MCF 10A (cell line): ENCODE measurements at regions of chr2 and their contacts with region 1.

Region 1: DNA sequence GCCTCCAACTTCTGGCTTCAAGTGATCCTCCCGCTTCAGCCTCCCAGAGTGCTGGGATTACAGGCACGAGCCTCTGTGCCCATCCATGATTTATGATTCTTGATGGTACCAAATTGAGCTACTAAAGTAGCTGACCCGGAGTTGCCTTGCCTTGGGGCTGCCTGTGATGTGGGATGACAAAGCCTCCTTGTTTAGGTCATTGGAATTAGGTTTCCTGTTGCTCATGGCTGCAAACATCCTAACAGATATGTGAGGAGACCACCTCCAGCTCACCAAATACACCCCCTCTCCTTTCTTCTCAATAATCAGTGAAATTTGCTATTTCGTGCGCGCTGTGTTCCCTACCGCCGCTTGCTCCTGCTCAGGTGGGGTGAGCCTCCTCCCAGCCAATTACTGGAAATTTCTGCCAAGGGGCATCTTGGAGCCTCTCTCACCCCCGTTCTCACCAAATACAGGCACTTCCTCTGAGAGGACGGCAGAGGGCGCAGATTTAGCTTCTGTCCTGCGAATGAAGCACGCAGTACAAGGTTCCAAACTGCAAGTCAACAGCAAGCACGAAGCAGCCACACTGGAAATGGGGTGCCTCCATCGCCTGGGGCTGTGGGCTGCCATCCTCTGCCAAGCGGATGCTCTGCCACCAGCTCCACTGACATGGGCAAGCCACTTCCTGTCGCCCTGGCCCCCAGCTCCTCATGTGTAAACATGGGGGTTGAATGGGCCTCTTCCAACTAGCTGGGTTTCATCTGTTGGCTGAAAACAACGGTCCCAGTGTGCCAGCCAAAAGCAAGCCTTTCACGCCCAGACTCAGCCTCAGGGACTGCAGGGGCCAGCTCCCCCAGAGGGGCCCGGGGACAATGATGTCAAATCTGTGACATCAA is 71.7 kb downstream of the NCAPH start:
- DNase-seq: peak; percentile 76
- H3K4me3 Mint-ChIP-seq: no peak overlapping the region
- H3K27ac Mint-ChIP-seq: no peak overlapping the region
- H3K4me1 Mint-ChIP-seq: peaks cover 17% of the 10 kb centered on the region
- H3K27me3 Mint-ChIP-seq: peaks cover 12% of the 10 kb centered on the region
- CTCF ChIP-seq: peak; percentile 72

Region 2: GRCh38 chr2:96389736-96390135 is 17.5 kb before region 1 on chr2:
- CTCF ChIA-PET with region 1: interaction called, 33 read pairs
- POLR2A ChIA-PET with region 1: no interaction called
- intact Hi-C with region 1: no loop called
- DNase-seq: no peak
- H3K4me3 Mint-ChIP-seq: no peak overlapping the region
- H3K27ac Mint-ChIP-seq: no peak overlapping the region
- H3K4me1 Mint-ChIP-seq: no peaks in the 10 kb centered on the region
- H3K27me3 Mint-ChIP-seq: peaks cover 13% of the 10 kb centered on the region
- CTCF ChIP-seq: no peak

Region 3: DNA sequence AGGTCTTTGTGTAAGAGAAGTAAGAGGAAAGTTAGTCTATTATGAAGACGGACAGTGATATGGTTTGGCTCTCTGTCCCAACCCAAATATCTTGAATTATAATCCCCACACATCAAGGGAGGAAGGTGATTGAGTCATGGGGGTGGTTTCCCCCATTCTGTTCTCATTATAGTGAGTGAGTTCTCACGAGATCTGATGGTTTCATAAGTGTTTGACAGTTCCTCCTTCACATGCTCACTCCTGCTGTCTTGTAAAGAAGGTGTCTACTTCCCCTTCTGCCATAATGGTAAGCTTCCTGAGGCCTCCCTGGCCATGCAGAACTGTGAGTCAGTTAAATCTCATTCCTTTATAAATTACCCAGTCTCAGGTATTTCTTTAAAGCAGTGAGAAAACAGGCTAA is 30.2 kb after region 1 on chr2:
- CTCF ChIA-PET with region 1: interaction called, 10 read pairs
- POLR2A ChIA-PET with region 1: no interaction called
- intact Hi-C with region 1: no loop called
- DNase-seq: no peak
- H3K4me3 Mint-ChIP-seq: no peak overlapping the region
- H3K27ac Mint-ChIP-seq: no peak overlapping the region
- H3K4me1 Mint-ChIP-seq: no peaks in the 10 kb centered on the region
- H3K27me3 Mint-ChIP-seq: no peaks in the 10 kb centered on the region
- CTCF ChIP-seq: no peak

Region 4: GRCh38 chr2:96547751-96548161 is 140.5 kb after region 1 on chr2:
- CTCF ChIA-PET with region 1: interaction called, 10 read pairs
- POLR2A ChIA-PET with region 1: no interaction called
- intact Hi-C with region 1: no loop called
- DNase-seq: no peak
- H3K4me3 Mint-ChIP-seq: no peak overlapping the region
- H3K27ac Mint-ChIP-seq: no peak overlapping the region
- H3K4me1 Mint-ChIP-seq: no peaks in the 10 kb centered on the region
- H3K27me3 Mint-ChIP-seq: no peaks in the 10 kb centered on the region
- CTCF ChIP-seq: no peak

Region 5: GRCh38 chr2:96679848-96680247 is 272.6 kb after region 1 on chr2:
- CTCF ChIA-PET with region 1: no interaction called
- POLR2A ChIA-PET with region 1: no interaction called
- intact Hi-C with region 1: no loop called
- DNase-seq: no peak
- H3K4me3 Mint-ChIP-seq: no peak overlapping the region
- H3K27ac Mint-ChIP-seq: no peak overlapping the region
- H3K4me1 Mint-ChIP-seq: no peaks in the 10 kb centered on the region
- H3K27me3 Mint-ChIP-seq: peaks cover 13% of the 10 kb centered on the region
- CTCF ChIP-seq: no peak

Region 6: GRCh38 chr2:96773922-96774321 is 366.6 kb after region 1 on chr2:
- CTCF ChIA-PET with region 1: no interaction called
- POLR2A ChIA-PET with region 1: no interaction called
- intact Hi-C with region 1: no loop called
- DNase-seq: no peak
- H3K4me3 Mint-ChIP-seq: no peak overlapping the region
- H3K27ac Mint-ChIP-seq: no peak overlapping the region
- H3K4me1 Mint-ChIP-seq: no peaks in the 10 kb centered on the region
- H3K27me3 Mint-ChIP-seq: no peaks in the 10 kb centered on the region
- CTCF ChIP-seq: no peak